Activated T-helper 1 cell treated with anti-CD3 and anti-CD28 coated beads, Interleukin-12 subunit alpha, Interleukin-12 subunit beta, Interleukin-2, Interleukin-4 antibody, amounts not matched to agents 30 ng/mL and 10 ng/mL and 1 ng/mL, durations not matched to agents 14 hours and 24 hours and 36 hours (primary cell): ENCODE measurements at regions of chr1 and their contacts with region 1.

Region 1: DNA sequence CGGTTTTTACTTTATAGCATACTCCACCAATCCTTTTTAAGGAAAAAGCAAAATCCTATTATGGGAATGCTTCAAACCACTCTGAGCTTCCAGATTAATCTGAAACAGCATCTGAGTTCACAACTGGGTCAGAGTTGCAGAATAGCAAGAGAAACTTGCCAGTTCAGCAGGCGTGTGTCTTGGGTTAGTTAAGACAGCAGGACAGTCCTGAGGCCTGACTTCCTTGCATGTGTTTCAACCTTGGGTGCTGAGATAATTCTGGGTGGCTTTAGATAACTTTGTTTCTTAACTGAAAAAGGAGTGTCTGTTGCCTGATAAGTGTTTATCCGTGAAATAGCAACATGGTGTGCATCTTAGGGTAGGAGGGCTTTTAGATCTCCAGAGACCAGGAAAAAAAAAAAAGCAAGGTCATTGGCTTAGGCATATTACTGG is 169.2 kb downstream of the DHRS3 start:
- DNase-seq: no peak
- H3K4me3 Mint-ChIP-seq: peak overlapping the region; percentile 53
- H3K27ac Mint-ChIP-seq: peak overlapping the region; percentile 84
- H3K4me1 Mint-ChIP-seq: peaks cover 83% of the 10 kb centered on the region
- H3K27me3 Mint-ChIP-seq: peaks cover 10% of the 10 kb centered on the region

Region 2: GRCh38 chr1:12161662-12162458 is 286.9 kb before region 1 on chr1:
- intact Hi-C with region 1: loop called (anchors 5 kb)
- DNase-seq: peak; percentile 79
- H3K4me3 Mint-ChIP-seq: peak overlapping the region; percentile 69
- H3K27ac Mint-ChIP-seq: peak overlapping the region; percentile 95
- H3K4me1 Mint-ChIP-seq: peaks cover 82% of the 10 kb centered on the region
- H3K27me3 Mint-ChIP-seq: no peaks in the 10 kb centered on the region

Region 3: GRCh38 chr1:12386130-12386529 is 62.6 kb before region 1 on chr1:
- intact Hi-C with region 1: loop called (anchors 1 kb)
- DNase-seq: no peak
- H3K4me3 Mint-ChIP-seq: peak overlapping the region; percentile 38
- H3K27ac Mint-ChIP-seq: peak overlapping the region; percentile 70
- H3K4me1 Mint-ChIP-seq: peaks cover 58% of the 10 kb centered on the region
- H3K27me3 Mint-ChIP-seq: no peaks in the 10 kb centered on the region

Region 4: DNA sequence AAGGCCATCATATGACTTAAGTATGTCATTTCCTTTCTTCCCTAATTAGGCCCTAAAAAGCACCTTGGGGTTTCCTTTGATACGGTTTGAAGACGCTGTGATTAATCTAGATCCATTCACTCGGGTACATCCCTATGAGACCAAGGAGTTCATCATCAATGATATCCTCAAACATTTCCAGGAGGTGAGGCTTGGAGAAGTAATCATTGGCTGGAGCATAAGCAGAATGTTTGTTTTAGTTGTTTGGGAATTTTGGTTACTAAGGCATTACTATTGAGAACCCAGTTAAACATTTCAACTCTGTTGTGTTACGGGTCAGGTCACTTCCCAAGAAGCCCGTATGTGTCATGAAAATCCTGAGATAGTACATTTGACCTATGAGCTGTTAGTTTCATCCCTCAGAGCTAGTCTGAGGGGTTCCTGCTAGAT is 33.7 kb before region 1 on chr1:
- intact Hi-C with region 1: loop called (anchors 2 kb)
- DNase-seq: no peak
- H3K4me3 Mint-ChIP-seq: no peak overlapping the region
- H3K27ac Mint-ChIP-seq: no peak overlapping the region
- H3K4me1 Mint-ChIP-seq: peaks cover 22% of the 10 kb centered on the region
- H3K27me3 Mint-ChIP-seq: no peaks in the 10 kb centered on the region

Region 5: GRCh38 chr1:12472798-12473551 is 24.2 kb after region 1 on chr1:
- intact Hi-C with region 1: loop called (anchors 1 kb)
- DNase-seq: peak; percentile 64
- H3K4me3 Mint-ChIP-seq: peak overlapping the region; percentile 69
- H3K27ac Mint-ChIP-seq: peak overlapping the region; percentile 93
- H3K4me1 Mint-ChIP-seq: peaks cover 82% of the 10 kb centered on the region
- H3K27me3 Mint-ChIP-seq: no peaks in the 10 kb centered on the region

Region 6: GRCh38 chr1:12518931-12519692 is 70.3 kb after region 1 on chr1:
- intact Hi-C with region 1: loop called (anchors 1 kb)
- DNase-seq: peak; percentile 21
- H3K4me3 Mint-ChIP-seq: no peak overlapping the region
- H3K27ac Mint-ChIP-seq: peak overlapping the region; percentile 73
- H3K4me1 Mint-ChIP-seq: peaks cover 38% of the 10 kb centered on the region
- H3K27me3 Mint-ChIP-seq: no peaks in the 10 kb centered on the region

Region 7: DNA sequence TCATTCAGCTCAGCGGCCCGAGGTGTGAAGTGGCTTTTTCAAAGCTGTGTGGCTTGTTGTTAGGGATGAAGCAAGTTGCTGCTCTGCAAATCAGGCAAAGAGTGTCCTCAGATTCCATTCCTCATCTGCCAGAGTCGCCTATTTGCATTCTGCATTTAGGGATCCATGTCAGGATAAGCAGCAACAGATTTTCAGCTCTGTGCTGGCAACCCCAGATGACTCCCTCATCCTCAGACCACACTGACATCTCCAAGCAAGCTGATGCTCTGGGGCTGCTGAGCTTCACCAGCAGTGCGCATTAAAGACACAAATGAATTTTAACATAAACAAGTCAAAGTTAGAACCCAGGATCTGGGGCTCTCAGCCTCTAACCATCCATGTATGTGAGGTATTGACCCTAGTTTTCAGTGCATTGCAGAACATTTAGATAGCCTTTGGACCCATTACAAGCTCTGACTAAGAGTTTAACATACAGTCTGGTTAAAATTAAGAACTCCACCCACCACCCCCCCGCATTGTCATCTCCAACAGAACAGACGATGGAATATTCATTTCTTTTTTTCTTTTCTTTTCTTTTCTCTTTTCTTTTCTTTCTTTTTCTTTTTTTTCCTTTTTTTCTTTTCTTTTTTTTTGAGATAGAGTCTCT is 308.1 kb after region 1 on chr1:
- intact Hi-C with region 1: no loop called
- DNase-seq: no peak
- H3K4me3 Mint-ChIP-seq: no peak overlapping the region
- H3K27ac Mint-ChIP-seq: no peak overlapping the region
- H3K4me1 Mint-ChIP-seq: no peaks in the 10 kb centered on the region
- H3K27me3 Mint-ChIP-seq: peaks cover 12% of the 10 kb centered on the region